ENCODE measurements at regions of chr17 and their contacts with region 1.

Region 1: DNA sequence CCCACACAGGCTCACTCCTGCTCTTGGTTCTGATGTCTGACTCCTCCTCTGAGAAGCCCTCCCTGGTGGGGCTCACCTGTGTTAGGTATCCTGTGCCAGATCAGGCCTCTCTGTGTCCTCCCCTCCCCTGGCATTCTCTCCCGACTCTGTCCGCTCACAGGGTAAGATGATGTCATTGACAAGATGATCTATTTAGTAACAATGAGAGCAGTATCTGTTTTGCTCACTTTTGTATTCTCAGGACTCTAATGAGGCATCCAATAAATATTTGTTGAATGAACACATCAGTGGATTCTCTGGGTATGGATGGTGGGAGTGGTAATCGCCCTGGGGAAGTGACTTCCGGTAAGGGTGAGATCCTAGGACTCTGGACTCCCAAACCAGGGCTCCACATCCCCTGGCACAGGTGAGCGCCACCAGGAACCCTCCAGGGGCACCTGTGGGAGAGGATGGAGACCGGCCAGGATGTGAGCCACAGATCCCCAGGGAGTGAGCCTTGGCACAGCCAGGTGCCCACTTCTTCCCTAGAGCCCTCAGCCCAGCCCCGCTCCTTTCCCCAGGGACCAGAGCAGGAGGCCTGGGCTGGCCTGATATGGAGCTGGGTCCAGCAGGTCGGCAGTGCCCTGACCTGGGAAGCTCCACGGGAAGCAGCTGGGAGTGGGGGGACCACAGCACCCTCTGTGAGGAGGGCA is 5.4 kb upstream of the HAP1 start:
- DNase-seq: no peak
- H3K4me3 ChIP-seq: no peak overlapping the region
- H3K27ac ChIP-seq: no peak overlapping the region
- H3K4me1 ChIP-seq: peaks cover under 1% of the 10 kb centered on the region
- H3K27me3 ChIP-seq: peaks cover 29% of the 10 kb centered on the region
- CTCF ChIP-seq: no peak

Region 2: GRCh38 chr17:41613277-41614082 is 126.3 kb before region 1 on chr17:
- intact Hi-C with region 1: no loop called
- DNase-seq: no peak
- H3K4me3 ChIP-seq: no peak overlapping the region
- H3K27ac ChIP-seq: no peak overlapping the region
- H3K4me1 ChIP-seq: no peaks in the 10 kb centered on the region
- H3K27me3 ChIP-seq: no peaks in the 10 kb centered on the region
- CTCF ChIP-seq: no peak

Region 3: DNA sequence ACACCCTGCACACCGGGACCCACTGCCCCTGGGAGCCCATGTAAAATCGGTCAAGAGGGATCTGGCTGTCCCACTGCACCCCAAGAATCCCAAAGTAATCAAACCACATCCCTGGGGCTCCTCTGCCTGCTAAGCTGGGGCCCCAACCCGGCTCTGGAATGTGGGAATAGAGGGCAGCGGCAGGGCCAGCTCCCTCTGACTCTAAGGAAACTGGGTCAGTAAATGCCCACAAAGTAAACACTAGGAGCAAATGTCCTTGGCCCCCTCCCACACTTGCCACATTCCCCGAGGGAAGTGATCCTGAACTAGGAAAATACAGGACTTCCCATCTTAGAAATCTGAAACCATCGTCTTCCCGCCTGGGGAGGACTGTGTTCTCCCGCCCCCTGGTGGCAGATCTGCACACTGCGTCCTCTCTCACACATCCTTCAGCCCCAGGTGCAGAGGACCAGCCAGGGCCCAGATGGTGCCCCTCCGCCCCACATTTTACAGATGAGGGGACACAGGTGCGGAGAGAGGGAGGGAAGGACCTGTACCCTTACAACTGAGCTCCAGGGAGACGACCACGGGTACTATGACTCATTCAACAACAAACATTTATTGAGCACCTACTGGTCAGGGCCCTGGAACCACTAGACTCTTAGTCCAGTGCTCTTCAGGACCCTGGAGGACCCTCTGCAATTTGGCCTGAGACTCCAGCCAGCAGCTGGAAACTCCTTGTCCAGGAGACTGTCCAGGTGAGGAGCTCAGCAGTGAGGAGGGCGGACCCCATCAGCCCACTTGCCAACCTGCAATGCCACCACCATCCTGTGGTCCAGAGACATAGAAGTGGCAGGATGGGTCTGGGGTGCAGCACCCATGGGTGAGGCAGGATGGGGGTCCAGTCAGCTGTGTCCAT is 61.8 kb after region 1 on chr17:
- intact Hi-C with region 1: loop called (anchors 2 kb)
- DNase-seq: peak; percentile 90
- H3K4me3 ChIP-seq: no peak overlapping the region
- H3K27ac ChIP-seq: peak overlapping the region; percentile 63
- H3K4me1 ChIP-seq: peaks cover 4% of the 10 kb centered on the region
- H3K27me3 ChIP-seq: no peaks in the 10 kb centered on the region
- CTCF ChIP-seq: peak; percentile 96

Region 4: GRCh38 chr17:41885733-41886132 is 145.9 kb after region 1 on chr17:
- intact Hi-C with region 1: loop called (anchors 10 kb)
- DNase-seq: no peak
- H3K4me3 ChIP-seq: no peak overlapping the region
- H3K27ac ChIP-seq: no peak overlapping the region
- H3K4me1 ChIP-seq: no peaks in the 10 kb centered on the region
- H3K27me3 ChIP-seq: no peaks in the 10 kb centered on the region
- CTCF ChIP-seq: no peak